ENCODE measurements at regions of chr2 and their contacts with region 1.

Region 1: GRCh38 chr2:98473995-98474780 is 29.5 kb downstream of the INPP4A start:
- DNase-seq: no peak
- H3K4me3 ChIP-seq: no peak overlapping the region
- H3K27me3 ChIP-seq: no peaks in the 10 kb centered on the region
- CTCF ChIP-seq: no peak

Region 2: GRCh38 chr2:98458207-98458606 is 16.0 kb before region 1 on chr2:
- CTCF ChIA-PET with region 1: interaction called, 5 read pairs
- POLR2A ChIA-PET with region 1: interaction called, 23 read pairs
- DNase-seq: no peak
- H3K4me3 ChIP-seq: no peak overlapping the region
- H3K27me3 ChIP-seq: no peaks in the 10 kb centered on the region
- CTCF ChIP-seq: no peak

Region 3: DNA sequence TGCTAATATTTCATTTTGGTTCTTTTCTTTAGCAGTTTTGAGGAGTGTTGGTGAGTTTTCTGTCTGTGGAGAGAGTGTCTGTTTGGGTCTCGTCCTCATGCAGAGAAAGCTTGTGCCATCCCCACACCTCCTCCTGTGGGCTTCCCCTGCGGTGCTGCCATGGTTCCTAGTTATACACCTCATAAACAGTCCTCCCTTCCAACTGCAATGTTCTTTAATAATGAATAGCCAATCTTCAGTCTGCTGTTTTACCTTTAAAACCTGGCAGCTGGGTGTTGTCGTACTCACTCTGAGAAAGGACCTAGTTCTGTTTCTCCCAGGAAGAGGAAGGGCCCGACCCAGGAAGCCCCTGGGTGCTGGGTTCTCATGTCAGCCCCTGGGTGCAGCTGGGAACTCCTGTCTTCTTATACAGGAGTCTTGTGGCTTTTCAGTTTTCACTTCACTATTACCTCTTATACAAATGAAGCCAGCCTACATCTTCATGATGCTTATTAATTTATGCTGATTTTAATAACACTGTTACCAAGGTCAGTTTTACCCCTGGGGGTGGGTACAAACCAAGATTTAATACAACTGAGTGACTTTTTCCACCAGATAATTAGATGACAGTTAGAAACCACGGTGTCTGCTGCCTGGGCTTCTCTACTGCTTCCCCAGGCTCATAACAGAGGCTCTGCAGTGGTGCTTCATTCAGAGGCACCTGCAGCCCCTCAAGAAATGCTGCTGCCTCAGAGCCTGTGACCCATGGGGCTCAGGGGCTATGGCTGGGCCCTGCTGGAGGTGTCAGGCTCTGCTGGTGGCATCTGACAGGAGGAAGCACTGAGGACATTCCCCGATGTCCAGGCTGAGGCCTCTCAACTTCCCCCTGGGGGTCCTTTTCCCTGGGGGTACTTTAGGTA is 75.0 kb after region 1 on chr2:
- CTCF ChIA-PET with region 1: no interaction called
- POLR2A ChIA-PET with region 1: no interaction called
- DNase-seq: no peak
- H3K4me3 ChIP-seq: no peak overlapping the region
- H3K27me3 ChIP-seq: no peaks in the 10 kb centered on the region
- CTCF ChIP-seq: no peak